ENCODE measurements at regions of chr1 and their contacts with region 1.

Region 1: DNA sequence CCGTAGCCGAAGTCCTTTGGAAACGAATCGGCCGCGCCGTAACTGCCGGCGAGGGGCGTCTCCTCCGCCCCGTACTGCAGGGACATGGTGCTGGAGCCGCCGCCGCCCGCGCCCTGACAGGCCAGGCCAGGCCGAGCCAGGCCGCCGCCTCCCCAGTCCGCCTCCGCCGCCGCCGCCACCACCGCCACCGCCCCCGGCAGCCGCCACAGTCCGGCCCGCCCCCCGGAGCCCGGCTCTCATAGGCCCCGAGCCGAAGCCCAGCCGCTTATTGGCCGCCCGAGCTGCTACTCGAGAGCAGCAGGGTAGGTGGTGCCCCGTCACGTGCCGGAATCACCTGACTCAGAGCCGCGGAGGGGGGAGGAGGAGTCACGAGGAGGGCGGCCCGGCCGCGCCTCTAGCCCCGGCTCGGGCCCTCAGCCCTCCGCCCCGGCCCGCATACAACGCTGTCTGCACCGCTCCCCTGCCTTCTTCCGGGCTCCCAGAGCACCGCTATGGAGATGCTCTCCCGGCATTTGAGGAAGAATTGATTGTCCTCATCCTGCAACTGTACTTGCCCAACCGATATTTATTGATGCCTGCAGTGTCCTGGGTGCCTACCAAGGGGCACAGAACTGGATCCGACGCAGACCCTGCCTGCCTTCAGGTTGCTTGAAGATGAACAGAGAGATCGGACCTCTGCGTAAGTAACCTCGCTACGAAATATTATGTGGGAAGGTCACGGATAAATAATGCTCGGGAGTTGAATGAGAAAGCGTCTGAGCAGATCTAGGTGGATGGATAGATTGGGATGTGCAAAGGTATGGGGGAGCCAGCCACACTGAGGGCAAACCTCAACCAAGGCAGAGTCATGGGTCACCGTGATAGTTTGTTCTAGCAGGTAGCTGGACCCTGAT is at the start of gene RRAGC:
- DNase-seq: peak; percentile 95 to 99 (median 98)
- ATAC-seq: peak; percentile 98
- H3K4me3 ChIP-seq: peak within 1 kb of the TSS; percentile 85
- H3K4me3 Mint-ChIP-seq: peak within 1 kb of the TSS; percentile 96
- H3K27ac ChIP-seq: peak within 1 kb of the TSS; percentile 10 to 58
- H3K27ac Mint-ChIP-seq: peak within 1 kb of the TSS; percentile 89
- H3K4me1 ChIP-seq: peaks cover 31% of the 10 kb centered on the region
- H3K4me1 Mint-ChIP-seq: peaks cover 73% of the 10 kb centered on the region
- H3K27me3 ChIP-seq: no peaks in the 10 kb centered on the region
- H3K27me3 Mint-ChIP-seq: no peaks in the 10 kb centered on the region
- CTCF ChIP-seq: no peak
- total RNA-seq, gene RRAGC: 9.2 to 11.4 TPM

Region 2: DNA sequence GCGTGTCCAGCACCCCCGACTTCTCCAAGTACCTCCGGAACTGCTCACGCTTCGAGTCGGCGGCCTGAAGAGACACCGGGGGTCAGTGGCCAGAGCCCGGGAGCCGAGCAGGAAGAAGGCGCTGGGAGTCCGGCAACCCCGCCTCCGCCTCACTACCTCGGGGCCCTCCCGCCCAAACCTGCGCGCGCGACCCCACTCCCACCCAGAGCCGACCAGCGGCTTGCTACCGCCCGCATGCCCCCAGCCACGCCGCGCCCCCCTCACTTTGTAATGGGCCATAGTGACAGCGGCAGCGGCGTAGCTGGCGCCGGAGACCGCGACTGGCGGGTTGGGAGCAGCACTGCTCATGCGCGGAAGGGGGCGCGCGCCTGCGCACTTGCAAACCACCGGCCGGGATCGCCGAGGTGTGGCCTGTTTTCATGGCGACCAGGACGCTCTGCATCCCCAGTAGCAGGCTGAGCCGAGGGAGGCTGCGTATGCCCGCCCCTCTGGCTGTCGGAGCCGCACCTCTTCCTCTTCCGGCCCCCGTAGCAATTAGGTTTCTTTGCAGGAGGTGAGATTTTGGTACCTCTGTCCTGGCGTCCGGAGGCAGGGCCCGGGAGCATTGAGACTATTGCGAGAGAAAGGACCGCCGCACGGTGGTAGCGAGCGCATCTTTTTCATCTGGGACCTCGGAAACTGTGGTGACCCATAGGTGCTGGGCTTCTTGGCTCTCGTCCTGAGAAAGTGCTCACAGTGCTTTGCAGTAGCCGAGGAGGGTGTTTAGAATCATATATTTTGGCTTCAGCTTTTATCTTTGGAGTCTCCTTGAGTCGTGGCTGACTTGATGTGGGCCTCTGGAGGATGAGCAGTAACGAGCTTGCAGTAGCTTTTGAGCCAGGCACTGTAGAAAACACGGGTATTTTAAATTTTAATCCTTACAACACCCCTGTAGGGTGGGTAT is 13.5 kb after region 1 on chr1 and contains the start of gene MYCBP:
- CTCF ChIA-PET with region 1: interaction called, 3 read pairs
- POLR2A ChIA-PET with region 1: interaction called, 25 read pairs
- intact Hi-C with region 1: loop called (anchors 1 kb)
- DNase-seq: peak; percentile 94 to 99 (median 97)
- ATAC-seq: peak; percentile 99
- H3K4me3 ChIP-seq: peak within 1 kb of the TSS; percentile 71
- H3K4me3 Mint-ChIP-seq: peak within 1 kb of the TSS; percentile 93
- H3K27ac ChIP-seq: peak within 1 kb of the TSS; percentile 13 to 73
- H3K27ac Mint-ChIP-seq: peak within 1 kb of the TSS; percentile 90
- H3K4me1 ChIP-seq: peaks cover 17% of the 10 kb centered on the region
- H3K4me1 Mint-ChIP-seq: peaks cover 34% of the 10 kb centered on the region
- H3K27me3 ChIP-seq: no peaks in the 10 kb centered on the region
- H3K27me3 Mint-ChIP-seq: no peaks in the 10 kb centered on the region
- CTCF ChIP-seq: no peak
- total RNA-seq, gene MYCBP: 1.5 to 2.2 TPM

Region 3: DNA sequence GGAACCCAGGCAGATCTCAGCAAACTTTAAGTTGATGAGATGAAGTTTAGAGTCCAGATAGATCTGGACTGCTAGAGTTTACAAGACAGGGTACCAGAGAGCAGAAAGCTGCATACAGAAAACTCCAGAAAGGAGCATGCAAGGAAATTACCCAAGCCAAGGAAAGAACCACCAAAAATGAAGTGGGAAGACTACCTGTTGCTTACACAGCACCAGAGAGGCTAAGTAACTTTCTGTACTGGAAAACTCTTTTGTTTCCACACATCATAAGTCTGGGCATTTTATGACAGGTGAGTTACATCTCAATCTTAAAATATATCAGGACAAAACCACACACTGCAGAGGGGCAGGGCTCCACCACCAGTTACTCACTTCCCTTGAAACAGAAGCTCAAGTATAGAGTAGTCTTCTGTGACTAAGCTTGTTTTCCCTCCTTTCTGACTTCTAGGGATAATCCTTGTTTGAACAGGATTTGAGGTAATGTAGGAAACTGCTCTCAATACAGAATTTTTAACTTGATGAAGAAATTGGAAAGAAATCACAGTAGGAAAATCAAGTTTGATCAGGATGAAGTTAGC is 38.9 kb after region 1 on chr1:
- CTCF ChIA-PET with region 1: no interaction called
- POLR2A ChIA-PET with region 1: no interaction called
- intact Hi-C with region 1: no loop called
- DNase-seq: no peak
- ATAC-seq: no peak
- H3K4me3 ChIP-seq: no peak overlapping the region
- H3K4me3 Mint-ChIP-seq: no peak overlapping the region
- H3K27ac ChIP-seq: no peak overlapping the region
- H3K27ac Mint-ChIP-seq: no peak overlapping the region
- H3K4me1 ChIP-seq: no peaks in the 10 kb centered on the region
- H3K4me1 Mint-ChIP-seq: no peaks in the 10 kb centered on the region
- H3K27me3 ChIP-seq: no peaks in the 10 kb centered on the region
- H3K27me3 Mint-ChIP-seq: no peaks in the 10 kb centered on the region
- CTCF ChIP-seq: no peak

Region 4: GRCh38 chr1:38997034-38997900 is 137.5 kb after region 1 on chr1:
- CTCF ChIA-PET with region 1: no interaction called
- POLR2A ChIA-PET with region 1: no interaction called
- intact Hi-C with region 1: loop called in 1 of 2 experiments (anchors 2 kb)
- DNase-seq: peak in 3 of 14 experiments; percentile 38 to 78 (median 42)
- ATAC-seq: peak; percentile 80
- H3K4me3 ChIP-seq: peak overlapping the region; percentile 10
- H3K4me3 Mint-ChIP-seq: peak overlapping the region; percentile 81
- H3K27ac ChIP-seq: peak overlapping the region; percentile 31 to 42
- H3K27ac Mint-ChIP-seq: peak overlapping the region; percentile 87
- H3K4me1 ChIP-seq: peaks cover 57% of the 10 kb centered on the region
- H3K4me1 Mint-ChIP-seq: peaks cover 71% of the 10 kb centered on the region
- H3K27me3 ChIP-seq: no peaks in the 10 kb centered on the region
- H3K27me3 Mint-ChIP-seq: no peaks in the 10 kb centered on the region
- CTCF ChIP-seq: no peak

Region 5: GRCh38 chr1:39091845-39092645 is 232.2 kb after region 1 on chr1:
- CTCF ChIA-PET with region 1: no interaction called
- POLR2A ChIA-PET with region 1: no interaction called
- intact Hi-C with region 1: loop called (anchors 5 to 10 kb)
- DNase-seq: peak in 13 of 14 experiments; percentile 37 to 79 (median 53)
- ATAC-seq: peak; percentile 78
- H3K4me3 ChIP-seq: no peak overlapping the region
- H3K4me3 Mint-ChIP-seq: no peak overlapping the region
- H3K27ac ChIP-seq: no peak overlapping the region
- H3K27ac Mint-ChIP-seq: no peak overlapping the region
- H3K4me1 ChIP-seq: peaks cover 18% of the 10 kb centered on the region
- H3K4me1 Mint-ChIP-seq: peaks cover 10% of the 10 kb centered on the region
- H3K27me3 ChIP-seq: no peaks in the 10 kb centered on the region
- H3K27me3 Mint-ChIP-seq: no peaks in the 10 kb centered on the region
- CTCF ChIP-seq: peak; percentile 78